ENCODE measurements at regions of chr7 and their contacts with region 1.

Region 1: DNA sequence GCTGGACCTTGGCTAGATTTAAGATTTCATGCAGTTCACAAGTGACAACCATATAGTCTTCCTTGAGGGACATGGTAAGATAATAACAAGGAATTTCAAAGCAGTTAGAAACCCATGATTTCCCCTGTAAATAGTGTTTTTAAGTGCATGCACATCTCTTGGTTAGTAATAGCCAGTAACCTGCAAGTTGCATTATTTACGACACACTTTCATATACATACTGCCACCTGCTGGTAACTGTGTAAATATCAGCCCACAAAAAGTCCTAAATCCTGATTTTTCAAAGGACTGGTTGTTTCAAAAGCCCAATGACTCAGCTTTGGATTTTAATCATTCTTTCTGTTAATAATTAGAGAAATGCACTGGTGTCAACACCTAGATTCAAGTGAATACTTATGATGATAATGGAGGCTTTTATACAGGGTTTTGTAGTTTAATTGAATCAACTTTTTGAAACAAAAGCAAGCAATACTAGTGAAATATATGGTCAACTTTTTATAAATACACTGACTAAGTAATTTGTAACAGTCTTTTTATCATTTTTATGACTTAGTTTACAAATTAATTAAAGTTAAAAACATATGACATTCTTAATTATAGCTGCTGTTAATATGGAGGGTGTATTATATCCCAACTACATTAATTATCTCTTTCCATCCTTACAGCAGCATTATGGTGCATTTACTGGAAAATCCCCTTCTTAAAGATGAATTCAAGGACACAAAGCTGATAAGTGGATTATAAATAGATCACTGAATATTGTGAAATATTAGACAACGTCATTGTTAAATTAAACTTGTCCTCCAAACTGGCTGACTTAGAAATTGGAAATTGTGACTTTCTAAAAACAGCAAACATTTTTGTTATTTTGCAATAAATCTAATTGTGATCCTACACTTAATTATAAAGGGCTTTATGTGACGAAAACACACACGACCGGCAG is 367.7 kb upstream of the SEMA3D start:
- DNase-seq: peak in 1 of 2 donors; percentile 29
- ATAC-seq: no peak
- H3K4me3 ChIP-seq: no peak overlapping the region
- H3K4me3 Mint-ChIP-seq: no peak overlapping the region
- H3K27ac ChIP-seq: no peak overlapping the region
- H3K27ac Mint-ChIP-seq: no peak overlapping the region
- H3K4me1 ChIP-seq: no peaks in the 10 kb centered on the region
- H3K4me1 Mint-ChIP-seq: no peaks in the 10 kb centered on the region
- H3K27me3 ChIP-seq: no peaks in the 10 kb centered on the region
- H3K27me3 Mint-ChIP-seq: no peaks in the 10 kb centered on the region
- CTCF ChIP-seq: peak; percentile 32

Region 2: DNA sequence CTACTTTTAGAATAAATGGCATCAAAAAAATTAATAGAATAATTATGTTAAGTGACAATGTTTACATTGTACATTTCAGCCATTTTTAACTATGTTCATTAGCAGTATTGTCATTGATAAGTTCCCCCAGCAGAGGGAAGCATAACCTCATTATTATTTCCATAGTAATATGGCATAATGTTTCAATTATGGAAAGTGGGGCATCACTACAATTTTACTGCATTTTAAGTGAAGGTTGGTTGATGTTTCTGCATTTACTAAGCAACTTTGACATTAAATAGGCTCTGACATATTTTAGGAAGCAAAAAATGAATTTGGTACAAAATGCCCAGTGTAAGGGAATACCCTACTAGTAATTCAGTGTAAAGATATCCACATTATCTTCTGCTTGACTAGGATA is 1578.2 kb before region 1 on chr7:
- intact Hi-C with region 1: loop called (anchors 10 kb)
- DNase-seq: peak in 1 of 2 donors; percentile 60
- ATAC-seq: peak in 2 of 3 donors; percentile 47 to 48
- H3K4me3 ChIP-seq: no peak overlapping the region
- H3K4me3 Mint-ChIP-seq: no peak overlapping the region
- H3K27ac ChIP-seq: no peak overlapping the region
- H3K27ac Mint-ChIP-seq: no peak overlapping the region
- H3K4me1 ChIP-seq: no peaks in the 10 kb centered on the region
- H3K4me1 Mint-ChIP-seq: no peaks in the 10 kb centered on the region
- H3K27me3 ChIP-seq: no peaks in the 10 kb centered on the region
- H3K27me3 Mint-ChIP-seq: no peaks in the 10 kb centered on the region
- CTCF ChIP-seq: peak; percentile 65

Measured in natural killer cell (primary cell).